IMR-90 (cell line): ENCODE measurements at regions of chr3 and their contacts with region 1.

Region 1: GRCh38 chr3:71064288-71064955 is 519.1 kb downstream of the FOXP1 start:
- DNase-seq: peak; percentile 68
- ATAC-seq: peak; percentile 35
- H3K4me3 ChIP-seq: peak overlapping the region; percentile 57
- H3K27ac ChIP-seq: peak overlapping the region; percentile 94
- H3K4me1 ChIP-seq: peaks cover 11% of the 10 kb centered on the region
- H3K27me3 ChIP-seq: no peaks in the 10 kb centered on the region
- CTCF ChIP-seq: no peak
- POLR2A ChIP-seq: peak; percentile 71
- RAD21 ChIP-seq: no peak

Region 2: GRCh38 chr3:70550723-70551319 is 513.6 kb before region 1 on chr3:
- CTCF ChIA-PET with region 1: interaction called, 3 read pairs
- POLR2A ChIA-PET with region 1: no interaction called
- dilution Hi-C with region 1: no loop called
- in situ Hi-C with region 1: no loop called
- intact Hi-C with region 1: loop called (anchors 2 kb)
- DNase-seq: peak; percentile 54
- ATAC-seq: peak; percentile 93
- H3K4me3 ChIP-seq: no peak overlapping the region
- H3K27ac ChIP-seq: no peak overlapping the region
- H3K4me1 ChIP-seq: no peaks in the 10 kb centered on the region
- H3K27me3 ChIP-seq: peaks cover 5% of the 10 kb centered on the region; the same call in 1 of the 2 replicates
- CTCF ChIP-seq: peak; percentile 67
- POLR2A ChIP-seq: no peak
- RAD21 ChIP-seq: peak; percentile 79

Region 3: DNA sequence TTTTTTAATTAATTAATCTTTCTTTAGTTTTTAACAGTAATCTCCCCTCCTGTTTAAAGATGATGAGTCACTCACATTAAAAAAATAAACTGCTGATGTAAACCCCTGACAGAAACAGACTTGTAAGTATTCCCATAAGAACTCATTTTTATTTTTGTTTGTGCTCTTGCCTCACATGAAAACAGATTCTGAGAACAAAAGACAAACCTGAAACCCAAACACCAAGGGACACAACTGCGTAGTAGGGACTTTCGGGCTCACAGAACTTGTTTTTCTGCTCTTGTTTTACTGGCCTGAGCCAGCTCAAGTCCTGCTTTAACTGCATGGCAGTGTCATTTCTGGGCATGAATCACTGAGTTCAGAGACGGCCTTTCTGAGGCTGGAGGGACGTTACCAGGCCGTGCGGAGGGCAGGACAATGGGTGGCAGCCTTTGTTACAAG is 81.7 kb before region 1 on chr3:
- CTCF ChIA-PET with region 1: no interaction called
- POLR2A ChIA-PET with region 1: no interaction called
- dilution Hi-C with region 1: no loop called
- in situ Hi-C with region 1: no loop called
- intact Hi-C with region 1: loop called (anchors 2 kb)
- DNase-seq: peak; percentile 86
- ATAC-seq: peak; percentile 70
- H3K4me3 ChIP-seq: no peak overlapping the region
- H3K27ac ChIP-seq: peak overlapping the region; percentile 72
- H3K4me1 ChIP-seq: peaks cover 35% of the 10 kb centered on the region
- H3K27me3 ChIP-seq: no peaks in the 10 kb centered on the region
- CTCF ChIP-seq: no peak
- POLR2A ChIP-seq: no peak
- RAD21 ChIP-seq: no peak

Region 4: DNA sequence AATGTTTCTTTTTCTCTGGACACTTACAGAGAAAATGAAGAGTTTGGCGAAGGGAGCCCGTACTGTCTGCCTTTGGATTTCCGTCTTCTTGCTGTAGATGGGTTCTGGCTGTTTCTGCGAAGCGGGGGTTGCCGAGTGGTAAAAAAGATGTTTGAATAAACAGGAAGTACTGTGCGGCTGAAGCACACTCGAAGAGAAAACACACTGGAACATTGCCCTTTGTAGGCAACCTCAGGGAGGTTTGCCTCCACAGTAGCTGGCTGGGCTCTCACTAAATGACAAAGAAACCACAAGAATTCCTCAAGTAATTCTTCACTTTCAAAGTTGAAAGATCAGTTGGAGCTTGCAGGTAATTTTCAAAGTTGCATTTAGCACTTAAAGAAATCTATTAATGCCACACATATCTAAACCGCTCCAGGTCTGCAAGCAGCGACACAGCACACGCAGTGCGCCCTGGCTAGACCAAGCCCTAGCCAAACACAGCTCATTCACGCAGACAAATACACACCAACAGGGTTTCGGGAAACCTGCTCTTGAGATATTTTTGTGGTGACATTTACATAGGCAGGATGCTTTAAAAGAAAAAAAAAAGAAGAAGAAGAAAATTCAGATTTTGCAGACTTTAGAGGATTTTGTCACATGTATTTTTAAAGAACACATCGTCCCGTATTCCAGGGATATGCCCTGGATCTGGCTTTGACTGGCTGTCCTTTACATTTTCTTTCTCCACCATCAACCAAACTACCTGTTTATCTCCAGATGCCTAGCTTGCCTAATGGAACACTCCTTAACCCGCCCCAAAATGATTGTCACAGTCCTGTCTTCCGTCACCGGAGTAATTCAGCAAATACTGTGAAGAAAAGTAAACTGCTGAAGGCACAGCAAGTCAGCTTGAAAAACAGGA is 66.3 kb after region 1 on chr3:
- CTCF ChIA-PET with region 1: no interaction called
- POLR2A ChIA-PET with region 1: no interaction called
- dilution Hi-C with region 1: no loop called
- in situ Hi-C with region 1: no loop called
- intact Hi-C with region 1: loop called (anchors 2 kb)
- DNase-seq: peak; percentile 83
- ATAC-seq: peak; percentile 66
- H3K4me3 ChIP-seq: peak overlapping the region; percentile 64
- H3K27ac ChIP-seq: peak overlapping the region; percentile 99
- H3K4me1 ChIP-seq: peaks cover 11% of the 10 kb centered on the region
- H3K27me3 ChIP-seq: no peaks in the 10 kb centered on the region
- CTCF ChIP-seq: no peak
- POLR2A ChIP-seq: peak; percentile 64; the same call in 1 of the 2 replicates
- RAD21 ChIP-seq: peak; percentile 27; the same call in 1 of the 2 replicates

Region 5: DNA sequence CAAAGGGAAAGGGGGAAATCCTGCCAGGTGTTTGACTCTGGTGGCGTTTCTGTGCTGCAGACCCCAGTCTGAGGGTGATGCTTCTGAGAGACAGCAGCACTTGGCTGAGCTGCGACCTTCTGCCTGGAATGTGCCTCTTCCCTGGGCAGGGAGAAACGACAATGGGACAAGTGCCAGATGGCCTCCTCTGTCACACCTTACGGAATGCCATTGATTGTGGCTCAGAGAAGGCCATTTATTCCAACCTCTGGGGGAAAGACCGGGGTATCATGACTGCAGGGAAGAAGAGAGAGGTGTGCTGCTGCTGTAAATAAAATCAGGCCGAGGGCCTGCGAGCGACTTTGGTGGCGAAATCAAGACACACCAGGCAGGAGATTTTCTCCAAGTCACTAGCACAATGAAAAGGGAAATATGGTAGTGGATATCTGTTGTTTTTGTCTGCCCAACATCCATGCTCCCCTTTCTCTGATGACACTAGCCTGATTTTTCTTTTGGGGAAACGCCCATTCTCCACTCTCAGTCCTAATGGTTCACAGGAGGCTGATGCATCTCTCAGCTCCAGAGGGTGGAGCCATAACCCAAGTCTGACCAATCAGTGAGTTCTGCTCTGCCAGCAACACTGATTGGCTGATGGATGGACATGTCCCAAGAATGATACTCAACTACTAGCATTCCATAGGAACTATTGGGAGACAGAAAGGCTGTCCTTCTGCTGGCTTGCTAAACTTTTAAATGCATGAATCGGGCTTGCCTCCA is 183.0 kb after region 1 on chr3:
- CTCF ChIA-PET with region 1: no interaction called
- POLR2A ChIA-PET with region 1: no interaction called
- dilution Hi-C with region 1: no loop called
- in situ Hi-C with region 1: no loop called
- intact Hi-C with region 1: loop called (anchors 5 kb)
- DNase-seq: peak; percentile 67
- ATAC-seq: 0 out of 2 replicates have a peak, but pooled peaks have one; percentile 8
- H3K4me3 ChIP-seq: no peak overlapping the region
- H3K27ac ChIP-seq: 0 out of 2 replicates have a peak overlapping the region, but pooled peaks have one; percentile 1
- H3K4me1 ChIP-seq: peaks cover 23% of the 10 kb centered on the region
- H3K27me3 ChIP-seq: no peaks in the 10 kb centered on the region
- CTCF ChIP-seq: no peak
- POLR2A ChIP-seq: no peak
- RAD21 ChIP-seq: no peak